Activated CD4-positive, alpha-beta memory T cell treated with anti-CD3 and anti-CD28 coated beads for 36 hours (primary cell): ENCODE measurements at regions of chr14 and their contacts with region 1.

Region 1: DNA sequence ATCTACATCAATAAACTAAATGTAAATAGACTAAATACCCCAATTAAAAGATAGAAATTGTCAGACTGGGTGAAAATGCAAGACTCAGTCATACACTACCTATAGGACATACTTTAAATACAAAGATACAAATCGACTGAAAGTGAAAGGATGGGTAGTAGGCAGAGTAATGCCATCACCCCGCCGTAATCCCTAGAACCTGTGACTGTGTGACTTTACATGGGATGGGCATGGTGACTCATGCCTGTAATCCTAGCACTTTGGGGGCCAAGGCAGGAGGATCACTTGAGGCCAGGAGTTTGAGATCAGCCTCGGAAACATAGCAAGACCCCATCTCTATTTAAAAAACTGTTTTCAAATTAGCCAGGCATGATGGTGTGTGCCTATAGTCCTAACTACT is 2.6 kb upstream of the EVL start:
- DNase-seq: peak; percentile 78
- H3K4me3 Mint-ChIP-seq: peak overlapping the region; percentile 69
- H3K27ac Mint-ChIP-seq: peak overlapping the region; percentile 98
- H3K4me1 Mint-ChIP-seq: peaks cover 80% of the 10 kb centered on the region
- H3K27me3 Mint-ChIP-seq: no peaks in the 10 kb centered on the region

Region 2: GRCh38 chr14:99971087-99971940 is 91.3 kb before region 1 on chr14:
- CTCF ChIA-PET with region 1: interaction called, 3 read pairs
- POLR2A ChIA-PET with region 1: interaction called, 5 read pairs
- intact Hi-C with region 1: loop called (anchors 2 kb)
- DNase-seq: peak; percentile 89
- H3K4me3 Mint-ChIP-seq: peak overlapping the region; percentile 51
- H3K27ac Mint-ChIP-seq: no peak overlapping the region
- H3K4me1 Mint-ChIP-seq: peaks cover 20% of the 10 kb centered on the region
- H3K27me3 Mint-ChIP-seq: peaks cover 24% of the 10 kb centered on the region

Region 3: GRCh38 chr14:100140452-100141078 is 78.0 kb after region 1 on chr14:
- CTCF ChIA-PET with region 1: no interaction called
- POLR2A ChIA-PET with region 1: no interaction called
- intact Hi-C with region 1: no loop called
- DNase-seq: no peak
- H3K4me3 Mint-ChIP-seq: no peak overlapping the region
- H3K27ac Mint-ChIP-seq: peak overlapping the region; percentile 15
- H3K4me1 Mint-ChIP-seq: no peaks in the 10 kb centered on the region
- H3K27me3 Mint-ChIP-seq: no peaks in the 10 kb centered on the region

Region 4: DNA sequence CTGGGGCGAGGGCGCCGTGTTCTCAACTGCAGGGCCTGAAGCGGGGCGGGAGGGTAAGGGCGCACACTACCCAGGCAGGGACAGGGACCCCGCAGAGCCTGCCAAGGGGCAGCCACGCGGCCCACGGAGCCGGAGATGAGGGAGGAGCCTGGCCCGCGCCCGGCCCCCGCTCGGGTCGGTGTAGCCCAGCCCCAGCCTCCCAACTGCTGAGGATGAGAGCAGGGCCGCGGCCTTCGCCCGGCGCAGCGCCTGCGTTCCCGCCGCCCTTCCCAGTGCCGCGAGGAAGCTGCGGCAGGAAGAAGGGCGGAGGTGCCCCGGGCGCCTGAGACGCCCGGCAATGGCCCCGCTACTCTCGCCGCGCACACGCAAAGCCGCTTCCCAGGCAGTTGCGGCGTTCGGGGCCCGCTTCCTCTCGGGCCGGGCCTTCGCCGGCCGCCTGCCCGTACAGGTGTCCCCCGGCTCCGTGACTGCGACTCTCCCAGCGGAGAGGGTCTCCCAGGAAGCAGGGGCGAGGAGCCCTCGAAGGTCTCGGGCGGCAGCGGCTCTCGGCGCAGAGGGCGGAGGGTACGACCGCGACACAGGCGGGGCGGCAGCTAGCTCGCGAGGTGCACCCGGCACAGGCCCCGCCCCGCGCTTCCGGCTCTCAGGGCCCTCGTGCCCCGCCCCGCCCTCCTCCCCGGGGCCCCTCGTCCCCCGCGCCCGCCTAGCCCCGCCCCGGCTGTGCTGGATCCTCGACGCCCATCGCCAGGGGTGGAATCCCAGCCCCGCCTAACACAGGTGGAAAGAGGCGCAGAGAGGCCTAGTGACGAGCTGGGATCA is 151.6 kb after region 1 on chr14:
- CTCF ChIA-PET with region 1: no interaction called
- POLR2A ChIA-PET with region 1: no interaction called
- intact Hi-C with region 1: no loop called
- DNase-seq: peak; percentile 95
- H3K4me3 Mint-ChIP-seq: peak overlapping the region; percentile 75
- H3K27ac Mint-ChIP-seq: peak overlapping the region; percentile 89
- H3K4me1 Mint-ChIP-seq: peaks cover 26% of the 10 kb centered on the region
- H3K27me3 Mint-ChIP-seq: no peaks in the 10 kb centered on the region

Region 5: DNA sequence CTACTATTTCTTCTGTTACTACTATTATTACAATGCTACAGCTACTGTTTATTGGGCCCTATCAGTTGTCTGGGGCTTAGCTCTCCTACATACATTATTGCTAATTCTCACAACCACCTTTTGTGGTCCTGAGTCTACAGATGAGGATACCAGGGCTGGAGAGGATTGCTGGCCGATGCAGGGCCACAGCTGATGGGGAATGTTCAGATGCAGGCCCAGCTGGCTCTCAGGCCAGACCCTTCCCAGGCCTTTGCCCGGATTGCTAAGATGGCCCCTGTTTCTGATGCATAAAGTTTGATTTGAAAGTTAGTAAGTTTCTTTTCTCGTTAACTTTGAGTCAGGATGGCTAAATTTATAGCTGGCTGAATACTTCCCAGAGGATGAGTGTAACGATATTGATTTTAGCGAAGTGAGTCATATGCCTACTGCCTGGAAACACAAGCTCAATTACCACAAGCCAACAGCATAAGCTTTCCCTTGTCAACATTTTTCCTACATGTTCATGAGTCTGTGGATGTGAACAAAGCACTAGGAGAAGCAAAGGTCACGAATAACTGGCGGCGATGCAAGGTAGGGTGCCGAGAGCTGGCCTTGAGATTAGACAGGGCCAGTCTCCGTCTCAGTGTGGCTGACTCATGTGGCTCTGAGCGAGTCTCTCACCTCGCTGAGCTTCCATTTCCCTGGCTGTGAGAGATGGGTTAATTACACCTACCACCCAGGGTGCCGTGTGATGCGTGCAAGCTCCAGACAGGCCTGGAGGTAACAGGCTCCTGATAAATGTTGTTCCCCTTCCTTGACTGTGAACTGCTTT is 413.6 kb after region 1 on chr14:
- CTCF ChIA-PET with region 1: no interaction called
- POLR2A ChIA-PET with region 1: no interaction called
- intact Hi-C with region 1: no loop called
- DNase-seq: no peak
- H3K4me3 Mint-ChIP-seq: no peak overlapping the region
- H3K27ac Mint-ChIP-seq: no peak overlapping the region
- H3K4me1 Mint-ChIP-seq: no peaks in the 10 kb centered on the region
- H3K27me3 Mint-ChIP-seq: no peaks in the 10 kb centered on the region